Gastrocnemius medialis (tissue), 4 donors: ENCODE measurements at regions of chr4 and their contacts with region 1.

Region 1: GRCh38 chr4:87006676-87007527 is 72.1 kb downstream of the AFF1 start:
- DNase-seq: peak; percentile 93 to 94
- ATAC-seq: peak; percentile 79 to 83
- H3K4me3 ChIP-seq: peak overlapping the region; percentile 73 to 96 (median 84)
- H3K27ac ChIP-seq: peak overlapping the region; percentile 93 to 97 (median 96)
- H3K4me1 ChIP-seq: peaks cover 62 to 66% of the 10 kb centered on the region in 2 donors
- H3K27me3 ChIP-seq: no peaks in the 10 kb centered on the region
- CTCF ChIP-seq: peak in 4 of 5 experiments; percentile 34 to 42 (median 38)
- POLR2A ChIP-seq: peak; percentile 93 to 99

Region 2: DNA sequence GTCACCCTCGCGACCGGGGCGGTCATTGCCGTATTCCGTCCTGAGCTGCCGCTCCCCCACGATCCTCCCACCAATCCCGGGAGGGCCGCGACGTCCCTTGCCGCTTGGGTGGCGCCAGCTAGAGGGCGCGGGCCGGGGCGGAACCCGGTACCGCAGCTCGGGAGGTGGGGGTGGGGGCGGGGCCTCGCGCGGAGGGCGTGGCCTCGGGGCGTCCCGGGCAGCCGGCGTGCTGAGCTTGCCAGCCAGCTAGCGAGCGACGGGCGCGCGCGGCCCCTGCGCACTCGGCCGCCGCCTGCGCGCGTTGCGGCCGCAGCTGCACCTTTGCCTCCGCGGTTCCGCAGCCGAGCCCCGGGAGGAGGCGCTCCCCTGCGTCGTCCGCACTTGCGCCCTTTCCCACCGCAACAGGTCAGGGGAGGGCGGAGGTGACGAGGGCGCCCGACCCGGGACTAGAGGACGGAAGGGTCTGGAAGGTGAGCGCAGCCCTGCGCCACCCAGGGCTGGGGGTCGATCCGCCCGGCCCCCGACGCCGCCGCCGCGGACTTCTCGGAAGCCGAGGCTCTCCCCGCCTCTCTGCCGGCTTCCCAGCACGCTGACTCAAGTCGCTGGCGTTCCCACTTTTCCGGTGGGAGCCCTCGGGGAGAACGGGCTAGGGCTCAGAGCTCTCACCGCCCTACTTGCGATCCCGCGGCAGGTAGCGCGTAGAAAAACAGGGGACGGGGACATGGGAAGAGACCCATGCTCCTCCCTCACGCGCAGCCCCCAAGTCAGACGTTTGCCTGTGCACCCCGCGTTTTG is 71.9 kb before region 1 on chr4 and contains the start of gene AFF1:
- in situ Hi-C with region 1: loop called (anchors 5 to 10 kb)
- intact Hi-C with region 1: loop called (anchors 1 kb)
- DNase-seq: peak; percentile 92 to 96
- ATAC-seq: peak; percentile 70 to 79
- H3K4me3 ChIP-seq: peak within 1 kb of the TSS; percentile 79 to 97 (median 82)
- H3K27ac ChIP-seq: peak within 1 kb of the TSS; percentile 93 to 99 (median 96)
- H3K4me1 ChIP-seq: peaks cover 29 to 47% of the 10 kb centered on the region in 2 donors
- H3K27me3 ChIP-seq: no peaks in the 10 kb centered on the region
- CTCF ChIP-seq: peak; percentile 7 to 87 (median 58)
- POLR2A ChIP-seq: peak; percentile 97
- total RNA-seq, gene AFF1: 142 to 265 (median 197) TPM

Region 3: GRCh38 chr4:87026800-87027495 is 20.0 kb after region 1 on chr4:
- in situ Hi-C with region 1: no loop called
- intact Hi-C with region 1: no loop called
- DNase-seq: peak in 1 of 2 donors; percentile 58
- ATAC-seq: peak; percentile 46 to 74
- H3K4me3 ChIP-seq: peak overlapping the region in 1 of 4 donors; percentile 7
- H3K27ac ChIP-seq: peak overlapping the region; percentile 93 to 97 (median 94)
- H3K4me1 ChIP-seq: peaks cover 96 to 97% of the 10 kb centered on the region in 2 donors
- H3K27me3 ChIP-seq: no peaks in the 10 kb centered on the region
- CTCF ChIP-seq: no peak
- POLR2A ChIP-seq: no peak

Region 4: GRCh38 chr4:87108142-87108546 is 101.2 kb after region 1 on chr4:
- in situ Hi-C with region 1: loop called in 1 of 4 experiments (anchors 25 kb)
- intact Hi-C with region 1: loop called (anchors 5 kb)
- DNase-seq: peak; percentile 71 to 89
- ATAC-seq: peak; percentile 96 to 97
- H3K4me3 ChIP-seq: peak overlapping the region in 2 of 4 donors; percentile 4 to 23
- H3K27ac ChIP-seq: peak overlapping the region; percentile 78 to 91 (median 83)
- H3K4me1 ChIP-seq: peaks cover 70 to 72% of the 10 kb centered on the region in 2 donors
- H3K27me3 ChIP-seq: no peaks in the 10 kb centered on the region
- CTCF ChIP-seq: peak in 1 of 5 experiments; percentile 12
- POLR2A ChIP-seq: no peak

Region 5: DNA sequence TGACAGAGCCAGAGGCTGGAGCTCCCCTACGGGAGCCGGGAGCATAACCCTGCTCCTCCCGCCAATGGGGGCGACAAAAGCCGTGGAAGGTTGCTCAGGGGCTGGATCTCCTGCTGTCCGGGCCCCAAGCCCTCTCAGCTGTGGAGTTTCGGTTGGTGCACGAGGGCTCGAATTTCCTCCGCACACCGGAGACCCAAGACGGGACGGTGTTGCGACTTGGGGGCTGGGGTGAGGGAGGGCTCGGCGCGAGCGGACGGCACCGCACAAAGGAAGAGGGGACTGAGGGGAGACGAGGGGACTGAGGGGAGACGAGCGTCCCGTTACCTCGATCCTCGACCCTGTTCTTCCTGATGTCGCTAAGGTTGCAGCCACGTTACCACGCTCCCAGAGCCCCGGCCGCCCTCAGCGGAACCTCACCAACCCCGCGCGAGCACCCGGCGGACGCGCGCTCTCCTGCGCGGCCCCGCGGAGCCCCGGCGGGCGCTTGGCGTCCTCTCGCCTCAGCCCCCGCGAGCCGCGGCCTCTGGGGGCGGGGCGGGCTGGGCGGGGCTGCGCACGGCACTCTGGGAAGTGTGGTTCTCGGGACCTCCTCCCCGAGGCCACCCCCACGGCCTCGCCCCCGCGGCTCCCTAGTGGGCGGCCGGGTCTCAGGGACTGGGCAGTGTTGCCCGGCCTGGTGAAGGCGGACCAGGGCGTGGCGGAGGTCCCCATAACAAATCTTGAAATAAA is 213.4 kb after region 1 on chr4 and contains the start of gene KLHL8:
- in situ Hi-C with region 1: no loop called
- intact Hi-C with region 1: loop called (anchors 5 kb)
- DNase-seq: peak; percentile 54 to 81
- ATAC-seq: peak; percentile 87 to 88
- H3K4me3 ChIP-seq: peak within 1 kb of the TSS; percentile 85 to 96 (median 90)
- H3K27ac ChIP-seq: peak within 1 kb of the TSS; percentile 92 to 96 (median 94)
- H3K4me1 ChIP-seq: peaks cover 15 to 23% of the 10 kb centered on the region in 2 donors
- H3K27me3 ChIP-seq: no peaks in the 10 kb centered on the region
- CTCF ChIP-seq: peak in 2 of 5 experiments; percentile 1 to 13
- POLR2A ChIP-seq: peak; percentile 84 to 90
- total RNA-seq, gene KLHL8: 15.5 to 19.4 (median 18.6) TPM